Motor neuron (in vitro differentiated cells): ENCODE measurements at regions of chr1 and their contacts with region 1.

Region 1: GRCh38 chr1:154145986-154146385 is 8.9 kb downstream of the NUP210L start:
- ATAC-seq: no peak
- H3K4me3 ChIP-seq: no peak overlapping the region
- H3K27ac ChIP-seq: no peak overlapping the region
- H3K4me1 ChIP-seq: no peaks in the 10 kb centered on the region

Region 2: GRCh38 chr1:154019940-154020339 is 126.0 kb before region 1 on chr1:
- in situ Hi-C with region 1: loop called in 1 of 9 experiments (anchors 10 kb)
- ATAC-seq: no peak
- H3K4me3 ChIP-seq: no peak overlapping the region
- H3K27ac ChIP-seq: no peak overlapping the region
- H3K4me1 ChIP-seq: no peaks in the 10 kb centered on the region

Region 3: DNA sequence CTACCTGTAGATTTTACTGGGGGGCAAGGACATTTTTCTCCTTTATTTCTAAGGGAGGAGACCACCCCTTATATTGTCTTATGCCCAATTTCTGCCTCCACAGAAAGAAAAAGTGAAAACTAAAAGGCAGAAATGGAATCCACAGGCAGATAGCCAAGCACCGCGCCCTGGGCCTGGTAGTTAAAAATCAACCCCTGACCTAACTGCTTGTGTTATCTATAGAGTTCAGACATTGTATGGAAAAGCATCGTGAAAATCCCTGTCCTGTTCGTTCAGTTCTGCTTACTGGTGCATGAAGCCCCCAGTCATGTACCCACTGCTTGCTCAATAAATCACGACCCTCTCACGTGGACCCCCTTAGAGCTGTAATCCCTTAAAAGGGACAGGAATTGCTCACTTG is 225.4 kb after region 1 on chr1:
- in situ Hi-C with region 1: no loop called
- ATAC-seq: no peak
- H3K4me3 ChIP-seq: no peak overlapping the region
- H3K27ac ChIP-seq: no peak overlapping the region
- H3K4me1 ChIP-seq: no peaks in the 10 kb centered on the region